Activated CD4-positive, alpha-beta memory T cell treated with anti-CD3 and anti-CD28 coated beads, Interleukin-2, amount 10 ng/mL, durations not matched to agents 7 days and 5 days (primary cell): ENCODE measurements at regions of chr19 and their contacts with region 1.

Region 1: GRCh38 chr19:38929929-38930775 is at the start of gene SARS2:
- DNase-seq: peak; percentile 94
- H3K4me3 Mint-ChIP-seq: peak within 1 kb of the TSS; percentile 93
- H3K27ac Mint-ChIP-seq: peak within 1 kb of the TSS; percentile 92
- H3K4me1 Mint-ChIP-seq: peaks cover 55% of the 10 kb centered on the region
- H3K27me3 Mint-ChIP-seq: no peaks in the 10 kb centered on the region
- total RNA-seq, gene SARS2: 28.4 to 32.7 TPM

Region 2: DNA sequence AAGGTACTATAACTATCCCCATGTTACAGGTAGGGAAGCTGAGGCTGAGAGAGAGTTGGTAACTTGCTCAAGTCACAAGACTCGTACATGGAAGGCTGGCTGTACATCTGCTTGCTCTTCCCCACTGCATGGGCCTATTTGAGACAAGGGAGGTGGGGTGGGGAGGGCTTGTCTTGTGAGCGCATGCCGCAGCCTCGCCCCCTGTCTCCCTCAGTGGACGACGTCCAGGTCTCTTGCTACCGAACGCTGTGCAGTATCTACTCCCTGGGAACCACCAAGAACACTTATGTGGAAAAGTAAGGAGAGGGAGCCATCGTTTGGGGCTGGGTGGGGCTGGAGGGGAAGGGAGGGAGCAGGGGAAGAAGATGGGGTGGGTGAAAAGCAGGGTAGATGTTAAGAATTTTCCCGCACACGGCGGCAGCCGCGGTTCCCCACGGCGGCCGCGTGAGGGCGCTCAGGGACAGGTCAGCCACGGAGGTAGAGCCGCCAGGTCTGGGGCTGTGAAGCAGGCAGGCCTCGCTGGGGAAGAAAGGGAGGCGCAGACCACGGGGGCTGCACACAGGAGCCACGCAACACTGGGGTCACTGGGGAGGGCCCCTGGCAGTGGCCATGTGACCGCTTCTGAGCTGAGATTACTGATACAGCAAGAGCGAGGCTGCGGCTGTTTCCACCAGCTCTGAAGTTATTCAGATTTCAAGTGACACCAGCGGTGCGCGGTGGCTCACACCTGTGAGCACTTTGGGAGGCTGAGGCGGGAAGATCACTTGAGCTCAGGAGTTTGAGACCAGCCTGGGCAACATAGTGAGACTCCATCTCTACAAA is 415.1 kb before region 1 on chr19:
- CTCF ChIA-PET with region 1: interaction called, 13 read pairs
- POLR2A ChIA-PET with region 1: interaction called, 4 read pairs
- DNase-seq: peak; percentile 80
- H3K4me3 Mint-ChIP-seq: no peak overlapping the region
- H3K27ac Mint-ChIP-seq: peak overlapping the region; percentile 31
- H3K4me1 Mint-ChIP-seq: peaks cover 31% of the 10 kb centered on the region
- H3K27me3 Mint-ChIP-seq: peaks cover 4% of the 10 kb centered on the region

Region 3: DNA sequence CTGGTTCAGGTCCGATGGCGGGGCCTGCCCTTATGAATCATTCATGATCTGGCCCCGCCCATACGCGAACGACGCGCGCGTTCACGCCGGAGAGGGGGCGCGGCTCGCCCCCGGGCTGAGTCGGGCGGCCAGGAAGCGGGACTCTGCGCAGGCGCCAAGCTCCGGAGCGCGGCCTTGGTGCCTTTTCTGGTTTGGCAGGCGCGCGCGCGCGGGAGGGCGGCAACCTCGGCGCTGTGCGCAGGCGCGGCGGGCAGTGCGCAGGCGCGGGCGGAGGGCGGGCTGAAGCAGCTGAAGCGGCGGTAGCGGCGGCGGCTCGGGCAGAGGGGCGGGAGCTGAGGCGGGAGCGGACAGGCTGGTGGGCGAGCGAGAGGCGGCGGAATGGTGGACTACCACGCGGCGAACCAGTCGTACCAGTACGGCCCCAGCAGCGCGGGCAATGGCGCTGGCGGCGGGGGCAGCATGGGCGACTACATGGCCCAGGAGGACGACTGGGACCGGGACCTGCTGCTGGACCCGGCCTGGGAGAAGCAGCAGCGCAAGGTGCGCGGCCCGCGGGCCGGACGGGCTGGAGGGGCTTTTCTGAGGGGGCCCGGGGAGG is 282.7 kb before region 1 on chr19 and contains the start of gene ACTN4:
- CTCF ChIA-PET with region 1: interaction called, 15 read pairs
- POLR2A ChIA-PET with region 1: interaction called, 3 read pairs
- DNase-seq: peak; percentile 100
- H3K4me3 Mint-ChIP-seq: peak within 1 kb of the TSS; percentile 89
- H3K27ac Mint-ChIP-seq: peak within 1 kb of the TSS; percentile 80
- H3K4me1 Mint-ChIP-seq: peaks cover 45% of the 10 kb centered on the region
- H3K27me3 Mint-ChIP-seq: no peaks in the 10 kb centered on the region
- total RNA-seq, gene ACTN4: 532 to 534 TPM

Region 4: DNA sequence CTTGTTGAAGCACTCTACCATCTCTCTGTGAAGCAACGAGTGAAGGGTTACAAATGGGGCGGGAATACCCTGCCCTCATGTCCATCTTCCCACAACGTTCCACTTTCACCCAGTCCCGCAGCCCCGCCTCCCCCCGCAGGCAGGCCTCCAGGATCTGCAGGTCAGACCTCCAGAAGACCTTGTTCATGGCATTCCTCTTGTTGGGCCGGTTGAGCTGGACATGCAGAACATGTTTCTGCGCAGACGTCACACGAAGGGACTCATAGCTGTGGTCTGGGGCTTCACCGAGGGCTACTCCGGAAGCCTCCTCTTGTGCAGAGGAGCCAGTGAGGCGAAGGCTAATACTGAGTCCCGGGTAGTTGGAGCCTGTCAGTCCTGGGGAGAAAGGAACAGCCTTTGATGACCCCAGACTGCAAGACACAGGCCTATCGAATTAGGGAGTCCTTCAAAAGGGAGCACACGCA is 99.0 kb before region 1 on chr19:
- CTCF ChIA-PET with region 1: interaction called, 15 read pairs
- POLR2A ChIA-PET with region 1: interaction called, 5 read pairs
- DNase-seq: no peak
- H3K4me3 Mint-ChIP-seq: peak overlapping the region; percentile 85
- H3K27ac Mint-ChIP-seq: peak overlapping the region; percentile 80
- H3K4me1 Mint-ChIP-seq: peaks cover 34% of the 10 kb centered on the region
- H3K27me3 Mint-ChIP-seq: no peaks in the 10 kb centered on the region

Region 5: DNA sequence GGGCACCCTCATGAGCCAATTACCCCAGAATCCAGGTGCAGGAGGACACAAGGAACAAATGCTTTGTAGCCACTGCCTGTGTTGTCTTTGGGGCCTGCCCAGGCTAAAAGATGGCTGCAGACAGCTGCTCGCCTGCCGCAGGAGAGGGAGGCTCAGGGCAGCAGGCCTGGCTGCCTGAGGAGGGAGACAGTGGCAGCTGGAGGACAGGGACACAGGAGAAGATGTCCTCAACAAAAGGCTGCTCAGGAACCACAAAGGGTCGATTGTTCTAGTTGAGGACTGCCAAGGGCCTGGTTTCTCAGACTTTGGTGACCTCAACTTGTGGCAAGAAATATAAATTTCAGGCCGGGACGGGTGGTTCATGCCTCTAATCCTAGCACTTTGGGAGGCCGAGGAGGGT is 38.4 kb before region 1 on chr19:
- CTCF ChIA-PET with region 1: interaction called, 20 read pairs
- POLR2A ChIA-PET with region 1: no interaction called
- DNase-seq: no peak
- H3K4me3 Mint-ChIP-seq: no peak overlapping the region
- H3K27ac Mint-ChIP-seq: no peak overlapping the region
- H3K4me1 Mint-ChIP-seq: peaks cover 3% of the 10 kb centered on the region
- H3K27me3 Mint-ChIP-seq: no peaks in the 10 kb centered on the region